Heart right ventricle (tissue), 16 donors: ENCODE measurements at regions of chr16 and their contacts with region 1.

Region 1: GRCh38 chr16:82603784-82604411 is 22.9 kb upstream of the CDH13 start:
- DNase-seq: peak; percentile 46 to 58
- ATAC-seq: peak; percentile 69 to 92 (median 85)
- H3K4me3 ChIP-seq: no peak overlapping the region
- H3K27ac ChIP-seq: no peak overlapping the region
- H3K4me1 ChIP-seq: peaks cover 0 to 8% (median 0%) of the 10 kb centered on the region in 9 donors
- H3K27me3 ChIP-seq: no peaks in the 10 kb centered on the region
- CTCF ChIP-seq: peak; percentile 49 to 83 (median 71)

Region 2: GRCh38 chr16:82560805-82561325 is 43.0 kb before region 1 on chr16:
- intact Hi-C with region 1: no loop called
- DNase-seq: no peak
- ATAC-seq: no peak
- H3K4me3 ChIP-seq: no peak overlapping the region
- H3K27ac ChIP-seq: no peak overlapping the region
- H3K4me1 ChIP-seq: no peaks in the 10 kb centered on the region
- H3K27me3 ChIP-seq: no peaks in the 10 kb centered on the region
- CTCF ChIP-seq: no peak

Region 3: DNA sequence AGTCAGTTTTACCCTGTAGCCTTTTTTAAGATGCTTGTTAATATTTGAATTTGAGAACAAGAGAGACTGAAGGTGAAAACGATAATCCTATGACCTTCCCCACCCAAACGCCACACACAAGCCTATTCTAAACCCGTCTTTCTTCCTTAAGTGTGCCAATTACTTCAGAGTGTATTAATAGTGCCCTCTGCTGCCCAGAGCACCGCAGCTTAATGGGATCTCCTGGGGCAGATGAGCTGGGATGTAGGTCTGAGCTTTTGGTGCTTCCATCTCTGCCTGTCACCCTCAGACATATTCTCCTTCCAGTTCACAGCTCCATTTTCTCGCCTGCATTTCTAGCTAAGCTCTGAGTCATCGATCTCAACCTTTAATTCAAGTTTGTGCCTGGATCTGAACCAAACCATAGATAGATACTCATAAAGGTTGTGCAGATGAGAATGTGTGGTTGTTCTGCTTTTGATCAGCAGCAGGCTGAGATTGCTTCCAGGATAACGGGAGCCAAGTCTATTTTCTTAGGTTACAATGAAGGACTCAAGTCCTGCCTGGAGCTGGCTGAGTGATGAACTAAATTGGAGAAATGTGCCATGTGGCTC is 23.5 kb before region 1 on chr16:
- intact Hi-C with region 1: no loop called
- DNase-seq: peak in 1 of 2 donors; percentile 15
- ATAC-seq: peak; percentile 47 to 81 (median 62)
- H3K4me3 ChIP-seq: no peak overlapping the region
- H3K27ac ChIP-seq: no peak overlapping the region
- H3K4me1 ChIP-seq: peaks cover 0 to 5% (median 0%) of the 10 kb centered on the region in 9 donors
- H3K27me3 ChIP-seq: no peaks in the 10 kb centered on the region
- CTCF ChIP-seq: peak in 7 of 9 donors; percentile 32 to 63 (median 49)

Region 4: GRCh38 chr16:83068686-83069085 is 464.8 kb after region 1 on chr16:
- intact Hi-C with region 1: loop called in 3 of 10 experiments (anchors 2 to 10 kb)
- DNase-seq: peak in 1 of 2 donors; percentile 4
- ATAC-seq: peak in 1 of 8 donors; percentile 25
- H3K4me3 ChIP-seq: no peak overlapping the region
- H3K27ac ChIP-seq: no peak overlapping the region
- H3K4me1 ChIP-seq: peaks cover 0 to 9% (median 1%) of the 10 kb centered on the region in 9 donors
- H3K27me3 ChIP-seq: no peaks in the 10 kb centered on the region
- CTCF ChIP-seq: peak in 7 of 9 donors; percentile 15 to 59 (median 36)

Region 5: GRCh38 chr16:83215406-83216001 is 611.6 kb after region 1 on chr16:
- intact Hi-C with region 1: loop called in 1 of 10 experiments (anchors 10 kb)
- DNase-seq: peak in 1 of 2 donors; percentile 18
- ATAC-seq: no peak
- H3K4me3 ChIP-seq: no peak overlapping the region
- H3K27ac ChIP-seq: no peak overlapping the region
- H3K4me1 ChIP-seq: peaks cover 0 to 8% (median 0%) of the 10 kb centered on the region in 9 donors
- H3K27me3 ChIP-seq: no peaks in the 10 kb centered on the region
- CTCF ChIP-seq: peak; percentile 27 to 67 (median 43)

Region 6: GRCh38 chr16:83441517-83441916 is 837.6 kb after region 1 on chr16:
- intact Hi-C with region 1: loop called in 3 of 10 experiments (anchors 5 to 10 kb)
- DNase-seq: no peak
- ATAC-seq: peak in 3 of 8 donors; percentile 22 to 91 (median 52)
- H3K4me3 ChIP-seq: no peak overlapping the region
- H3K27ac ChIP-seq: peak overlapping the region in 1 of 10 donors; percentile 18
- H3K4me1 ChIP-seq: peaks cover 0 to 5% (median 0%) of the 10 kb centered on the region in 9 donors
- H3K27me3 ChIP-seq: no peaks in the 10 kb centered on the region
- CTCF ChIP-seq: peak in 1 of 9 donors; percentile 14

Region 7: GRCh38 chr16:83449861-83450260 is 846.0 kb after region 1 on chr16:
- intact Hi-C with region 1: loop called in 3 of 10 experiments (anchors 5 to 10 kb)
- DNase-seq: no peak
- ATAC-seq: no peak
- H3K4me3 ChIP-seq: no peak overlapping the region
- H3K27ac ChIP-seq: no peak overlapping the region
- H3K4me1 ChIP-seq: no peaks in the 10 kb centered on the region
- H3K27me3 ChIP-seq: no peaks in the 10 kb centered on the region
- CTCF ChIP-seq: no peak